ENCODE measurements at regions of chr9 and their contacts with region 1.

Region 1: GRCh38 chr9:14251154-14252071 is 62.5 kb downstream of the NFIB start:
- DNase-seq: peak; percentile 84
- H3K4me3 Mint-ChIP-seq: peak overlapping the region; percentile 48
- H3K27ac Mint-ChIP-seq: no peak overlapping the region
- H3K4me1 Mint-ChIP-seq: peaks cover 43% of the 10 kb centered on the region
- H3K27me3 Mint-ChIP-seq: no peaks in the 10 kb centered on the region
- CTCF ChIP-seq: no peak

Region 2: GRCh38 chr9:13863112-13863511 is 388.3 kb before region 1 on chr9:
- CTCF ChIA-PET with region 1: no interaction called
- POLR2A ChIA-PET with region 1: no interaction called
- intact Hi-C with region 1: no loop called
- DNase-seq: no peak
- H3K4me3 Mint-ChIP-seq: no peak overlapping the region
- H3K27ac Mint-ChIP-seq: no peak overlapping the region
- H3K4me1 Mint-ChIP-seq: peaks cover 10% of the 10 kb centered on the region
- H3K27me3 Mint-ChIP-seq: no peaks in the 10 kb centered on the region
- CTCF ChIP-seq: no peak

Region 3: DNA sequence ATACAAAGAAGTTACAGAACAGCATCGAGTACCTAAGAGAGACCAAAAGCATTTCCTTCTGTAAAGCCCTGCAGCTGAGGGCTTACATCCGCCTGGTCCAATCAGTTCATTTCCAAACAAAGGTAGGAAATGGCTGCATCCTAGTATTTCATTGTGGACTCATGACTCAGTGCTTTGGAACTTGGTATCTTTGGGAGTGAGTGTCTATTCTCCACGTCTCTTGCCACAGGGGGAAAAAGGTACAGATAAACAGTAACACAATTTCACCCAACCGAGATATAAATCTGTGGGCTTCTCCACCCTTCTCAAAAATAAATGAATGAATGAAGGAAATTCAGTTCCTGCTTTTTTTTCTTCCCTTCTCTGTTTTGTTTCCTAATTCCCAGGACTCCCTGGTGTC is 12.9 kb before region 1 on chr9:
- CTCF ChIA-PET with region 1: interaction called, 4 read pairs
- POLR2A ChIA-PET with region 1: interaction called, 17 read pairs
- intact Hi-C with region 1: no loop called
- DNase-seq: peak; percentile 86
- H3K4me3 Mint-ChIP-seq: peak overlapping the region; percentile 66
- H3K27ac Mint-ChIP-seq: peak overlapping the region; percentile 84
- H3K4me1 Mint-ChIP-seq: peaks cover 42% of the 10 kb centered on the region
- H3K27me3 Mint-ChIP-seq: no peaks in the 10 kb centered on the region
- CTCF ChIP-seq: no peak

Region 4: DNA sequence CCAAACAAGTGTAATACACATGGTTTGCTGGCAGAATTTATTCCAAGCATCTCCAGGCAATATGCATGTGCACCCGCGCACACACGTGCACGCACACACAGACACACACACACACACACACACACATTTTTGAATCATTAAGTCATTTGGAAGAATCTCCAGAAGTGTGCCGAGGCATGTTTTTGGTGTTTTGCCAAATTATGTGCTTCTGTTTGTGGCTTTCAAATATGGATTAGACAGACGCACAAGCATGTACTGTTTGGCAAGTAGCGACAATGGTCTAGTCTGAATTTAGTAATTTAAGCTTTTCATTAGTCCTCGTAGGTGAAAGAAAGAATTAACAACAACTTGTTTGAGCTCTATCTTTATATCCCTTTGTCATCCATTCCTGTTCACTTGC is 25.8 kb after region 1 on chr9:
- CTCF ChIA-PET with region 1: interaction called, 5 read pairs
- POLR2A ChIA-PET with region 1: interaction called, 16 read pairs
- intact Hi-C with region 1: no loop called
- DNase-seq: peak; percentile 83
- H3K4me3 Mint-ChIP-seq: peak overlapping the region; percentile 54
- H3K27ac Mint-ChIP-seq: peak overlapping the region; percentile 63
- H3K4me1 Mint-ChIP-seq: peaks cover 71% of the 10 kb centered on the region
- H3K27me3 Mint-ChIP-seq: no peaks in the 10 kb centered on the region
- CTCF ChIP-seq: no peak

Measured in MCF 10A (cell line).